B cell (primary cell): ENCODE measurements at regions of chr1 and their contacts with region 1.

Region 1: DNA sequence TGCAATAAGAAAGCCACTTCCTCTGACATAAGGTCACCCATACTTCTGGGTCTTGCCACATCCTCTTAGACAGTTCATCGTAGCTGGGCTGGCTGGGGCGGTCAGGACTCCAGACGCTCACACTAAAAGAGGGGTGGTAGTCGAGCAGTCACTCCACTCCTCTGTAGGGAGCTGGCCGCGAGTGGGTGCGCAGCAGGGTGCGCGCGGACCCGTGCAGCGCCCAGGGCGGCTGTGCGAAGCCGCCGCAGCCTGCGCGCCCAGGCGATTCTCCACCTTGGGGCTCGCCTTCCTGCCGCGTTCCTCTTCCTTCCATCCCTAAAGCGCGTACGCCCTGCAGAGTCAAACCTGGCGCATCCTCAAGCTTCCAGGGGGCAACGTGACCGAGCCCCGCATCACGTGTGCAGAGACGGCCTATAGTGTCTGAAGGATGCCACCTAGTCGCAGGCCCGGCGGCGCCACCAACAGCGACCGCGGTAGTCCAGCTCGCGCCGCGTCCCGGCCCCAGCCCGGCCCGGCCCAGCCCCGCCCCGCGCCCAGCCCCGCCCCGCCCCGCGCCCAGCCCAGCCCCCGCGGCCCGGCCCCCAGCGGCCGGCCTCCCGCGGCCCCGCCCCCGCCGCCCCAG is 360 bp upstream of the PRDX6 start:
- DNase-seq: peak; percentile 92
- ATAC-seq: peak; percentile 92
- H3K4me3 ChIP-seq: peak overlapping the region; percentile 48 to 96 (median 87)
- H3K4me3 Mint-ChIP-seq: peak overlapping the region; percentile 99
- H3K27ac ChIP-seq: peak overlapping the region; percentile 42 to 82
- H3K27ac Mint-ChIP-seq: peak overlapping the region; percentile 99
- H3K4me1 ChIP-seq: peaks cover 22 to 23% of the 10 kb centered on the region in 2 donors
- H3K4me1 Mint-ChIP-seq: peaks cover 42% of the 10 kb centered on the region
- H3K27me3 ChIP-seq: no peaks in the 10 kb centered on the region
- H3K27me3 Mint-ChIP-seq: no peaks in the 10 kb centered on the region
- CTCF ChIP-seq: no peak

Region 2: DNA sequence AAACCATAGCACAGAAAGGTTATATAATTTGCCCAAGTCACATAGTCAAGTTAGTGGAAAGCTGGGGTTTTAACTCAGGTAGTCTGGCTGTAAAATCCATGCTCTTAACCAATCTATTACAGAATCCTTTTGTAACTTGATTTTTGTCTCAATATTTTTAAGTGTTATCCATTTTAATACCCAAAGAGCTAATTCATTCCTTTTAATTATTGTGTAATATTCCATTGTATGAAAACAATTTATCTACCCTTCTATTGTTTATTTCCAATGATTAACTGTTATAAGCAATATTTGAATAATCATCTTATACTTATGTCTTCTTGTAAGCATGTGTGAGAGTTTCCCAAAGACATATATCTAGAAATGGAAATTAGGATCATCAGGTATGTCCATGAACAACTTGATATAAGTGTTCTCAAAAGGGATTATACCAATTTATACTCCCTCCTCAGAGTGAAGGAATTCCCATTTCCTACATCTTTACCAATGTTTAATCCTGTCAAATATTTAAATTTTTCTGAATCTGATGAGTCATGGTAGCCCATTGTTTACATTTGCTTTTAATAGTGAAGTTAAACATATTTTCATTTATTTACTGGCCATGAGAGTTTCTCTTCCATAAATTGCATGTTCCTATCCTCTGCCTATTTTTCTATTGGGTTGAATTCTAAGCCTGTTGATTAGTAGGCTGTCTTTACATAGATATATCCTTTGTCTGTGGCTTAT is 172.3 kb after region 1 on chr1:
- CTCF ChIA-PET with region 1: no interaction called
- POLR2A ChIA-PET with region 1: no interaction called
- intact Hi-C with region 1: no loop called
- DNase-seq: no peak
- ATAC-seq: no peak
- H3K4me3 ChIP-seq: no peak overlapping the region
- H3K4me3 Mint-ChIP-seq: no peak overlapping the region
- H3K27ac ChIP-seq: no peak overlapping the region
- H3K27ac Mint-ChIP-seq: no peak overlapping the region
- H3K4me1 ChIP-seq: no peaks in the 10 kb centered on the region
- H3K4me1 Mint-ChIP-seq: no peaks in the 10 kb centered on the region
- H3K27me3 ChIP-seq: no peaks in the 10 kb centered on the region
- H3K27me3 Mint-ChIP-seq: peaks cover 11% of the 10 kb centered on the region
- CTCF ChIP-seq: no peak

Region 3: GRCh38 chr1:173714759-173715537 is 238.2 kb after region 1 on chr1 and contains the start of gene KLHL20:
- CTCF ChIA-PET with region 1: no interaction called
- POLR2A ChIA-PET with region 1: no interaction called
- intact Hi-C with region 1: loop called (anchors 1 kb)
- DNase-seq: peak; percentile 90
- ATAC-seq: peak; percentile 93
- H3K4me3 ChIP-seq: peak within 1 kb of the TSS; percentile 76 to 92 (median 84)
- H3K4me3 Mint-ChIP-seq: peak within 1 kb of the TSS; percentile 98
- H3K27ac ChIP-seq: peak within 1 kb of the TSS; percentile 75 to 84
- H3K27ac Mint-ChIP-seq: peak within 1 kb of the TSS; percentile 96
- H3K4me1 ChIP-seq: peaks cover 10 to 15% of the 10 kb centered on the region in 2 donors
- H3K4me1 Mint-ChIP-seq: peaks cover 23% of the 10 kb centered on the region
- H3K27me3 ChIP-seq: peaks cover 0 to 9% (median 2%) of the 10 kb centered on the region in 4 experiments
- H3K27me3 Mint-ChIP-seq: peaks cover 26% of the 10 kb centered on the region
- CTCF ChIP-seq: no peak
- total RNA-seq, gene KLHL20: 32.2 and 35.4 TPM in 2 replicates

Region 4: GRCh38 chr1:173824331-173825081 is 347.7 kb after region 1 on chr1 and contains the starts of genes CENPL and DARS2:
- CTCF ChIA-PET with region 1: no interaction called
- POLR2A ChIA-PET with region 1: interaction called, 7 read pairs
- intact Hi-C with region 1: loop called (anchors 1 kb)
- DNase-seq: peak; percentile 94
- ATAC-seq: peak; percentile 89
- H3K4me3 ChIP-seq: peak within 1 kb of the TSS; percentile 78 to 100 (median 93)
- H3K4me3 Mint-ChIP-seq: peak within 1 kb of the TSS; percentile 92
- H3K27ac ChIP-seq: peak within 1 kb of the TSS; percentile 77 to 87
- H3K27ac Mint-ChIP-seq: peak within 1 kb of the TSS; percentile 95
- H3K4me1 ChIP-seq: peaks cover 8 to 18% of the 10 kb centered on the region in 2 donors
- H3K4me1 Mint-ChIP-seq: peaks cover 21% of the 10 kb centered on the region
- H3K27me3 ChIP-seq: no peaks in the 10 kb centered on the region
- H3K27me3 Mint-ChIP-seq: no peaks in the 10 kb centered on the region
- CTCF ChIP-seq: no peak
- total RNA-seq, gene CENPL: 9.7 and 14.4 TPM in 2 replicates
- total RNA-seq, gene DARS2: 17.0 and 17.3 TPM in 2 replicates

Region 5: GRCh38 chr1:174022080-174022975 is 545.6 kb after region 1 on chr1 and contains the start of gene RC3H1:
- CTCF ChIA-PET with region 1: no interaction called
- POLR2A ChIA-PET with region 1: interaction called, 4 read pairs
- intact Hi-C with region 1: loop called (anchors 5 kb)
- DNase-seq: peak; percentile 93
- ATAC-seq: peak; percentile 95
- H3K4me3 ChIP-seq: peak within 1 kb of the TSS; percentile 73 to 94 (median 91)
- H3K4me3 Mint-ChIP-seq: peak within 1 kb of the TSS; percentile 95
- H3K27ac ChIP-seq: peak within 1 kb of the TSS; percentile 76 to 93
- H3K27ac Mint-ChIP-seq: peak within 1 kb of the TSS; percentile 96
- H3K4me1 ChIP-seq: peaks cover 30 to 36% of the 10 kb centered on the region in 2 donors
- H3K4me1 Mint-ChIP-seq: peaks cover 41% of the 10 kb centered on the region
- H3K27me3 ChIP-seq: no peaks in the 10 kb centered on the region
- H3K27me3 Mint-ChIP-seq: no peaks in the 10 kb centered on the region
- CTCF ChIP-seq: no peak
- total RNA-seq, gene RC3H1: 84.4 and 84.5 TPM in 2 replicates